ENCODE measurements at regions of chrX and their contacts with region 1.

Region 1: GRCh38 chrX:7925867-7926472 is 1.2 kb downstream of the PNPLA4 start:
- DNase-seq: peak; percentile 49
- CTCF ChIP-seq: peak; percentile 87

Region 2: DNA sequence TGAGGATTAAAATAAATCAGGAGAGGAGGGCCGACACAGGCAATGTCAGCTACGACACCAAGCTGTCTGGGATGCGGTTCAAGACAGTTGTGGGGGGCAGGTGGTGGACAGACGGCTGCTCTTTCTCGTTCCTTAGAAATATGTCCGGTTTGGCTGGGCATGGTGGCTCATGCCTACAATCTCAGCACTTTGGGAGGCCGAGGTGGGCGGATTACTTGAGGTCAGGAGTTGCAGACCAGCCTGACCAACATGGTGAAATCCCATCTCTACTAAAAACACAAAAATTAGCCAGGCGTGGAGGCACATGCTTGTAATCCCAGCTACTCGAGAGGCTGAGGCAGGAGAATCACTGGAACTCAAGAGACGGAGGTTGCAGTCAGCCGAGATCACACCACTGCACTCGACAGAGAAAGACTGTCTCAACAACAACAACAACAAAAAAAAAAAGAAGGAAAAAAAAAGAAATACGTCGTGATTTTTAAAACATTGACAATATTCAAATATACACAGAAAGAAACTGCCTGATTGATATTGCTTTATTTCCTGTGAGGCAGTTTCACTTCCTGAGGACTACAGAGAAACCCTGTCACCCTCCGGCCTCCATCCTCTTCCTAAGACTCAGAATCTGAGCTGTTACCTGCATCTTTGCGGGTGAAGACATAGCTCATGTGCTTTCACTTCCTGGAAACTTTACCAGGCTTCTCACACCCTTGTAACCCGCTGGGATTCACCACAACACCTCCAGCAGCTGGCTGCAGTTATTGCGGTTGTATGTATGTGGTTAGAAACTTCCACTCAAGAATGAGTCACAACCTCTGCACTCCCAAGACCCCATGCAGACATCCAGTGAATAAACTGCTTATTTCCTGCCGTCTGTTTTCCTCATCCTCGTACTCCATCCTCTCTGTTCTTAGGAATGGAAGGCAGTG is 842.2 kb before region 1 on chrX:
- in situ Hi-C with region 1: loop called (anchors 25 kb)
- DNase-seq: peak; percentile 40
- CTCF ChIP-seq: no peak

Region 3: GRCh38 chrX:8341814-8342590 is 416.0 kb after region 1 on chrX:
- in situ Hi-C with region 1: no loop called
- DNase-seq: no peak
- CTCF ChIP-seq: no peak